SK-N-SH (cell line): ENCODE measurements at regions of chr4 and their contacts with region 1.

Region 1: DNA sequence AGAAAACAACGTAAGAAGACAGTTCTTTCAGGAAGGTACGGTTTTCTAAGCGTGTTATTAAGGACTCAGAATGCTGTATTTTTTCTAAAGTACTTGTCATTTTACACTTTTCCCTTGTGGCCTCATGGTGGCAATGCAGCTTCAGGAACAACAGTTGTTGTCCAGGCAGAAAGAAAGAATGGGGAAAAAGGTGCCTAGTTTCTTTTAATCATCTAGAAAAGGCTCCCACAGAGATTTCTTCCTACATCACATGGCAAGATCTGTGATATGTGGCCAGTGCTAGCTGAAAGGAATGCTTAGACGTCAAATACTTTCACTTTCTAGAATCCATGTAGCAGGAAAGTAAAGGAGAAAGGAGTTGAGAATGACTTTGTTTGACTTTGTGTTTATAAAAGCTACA is 49.0 kb upstream of the TRAM1L1 start:
- DNase-seq: peak; percentile 30
- H3K4me3 ChIP-seq: no peak overlapping the region
- H3K27ac ChIP-seq: no peak overlapping the region
- H3K4me1 ChIP-seq: no peaks in the 10 kb centered on the region; a peak in 1 of 4 replicates
- H3K27me3 ChIP-seq: no peaks in the 10 kb centered on the region
- CTCF ChIP-seq: peak; percentile 73
- EP300 ChIP-seq: no peak
- RAD21 ChIP-seq: peak; percentile 95

Region 2: DNA sequence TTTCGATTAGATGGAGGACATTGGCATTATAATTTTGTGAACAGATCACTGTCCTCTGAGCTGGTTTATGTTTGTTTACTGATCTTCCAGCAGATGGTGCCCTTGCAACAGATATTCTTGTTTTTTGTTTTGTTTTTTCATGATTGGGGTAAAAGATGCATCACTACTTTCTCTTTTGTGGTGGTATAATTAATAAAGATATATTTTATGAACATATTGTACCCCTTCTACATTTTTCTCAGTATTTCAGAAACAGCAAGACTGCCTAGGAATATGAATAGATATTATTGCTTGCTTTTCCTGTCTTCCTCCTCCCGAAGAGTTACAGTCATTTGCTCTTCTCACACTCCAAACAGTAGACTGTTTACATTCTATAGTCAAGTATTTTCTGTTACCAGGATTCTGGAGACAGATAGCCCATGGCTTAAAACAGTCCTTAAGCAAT is 954.2 kb before region 1 on chr4:
- CTCF ChIA-PET with region 1: interaction called, 15 read pairs
- POLR2A ChIA-PET with region 1: no interaction called
- DNase-seq: peak; percentile 24
- H3K4me3 ChIP-seq: peak overlapping the region in 1 of 2 experiments; percentile 46; a peak in 1 of 4 replicates
- H3K27ac ChIP-seq: no peak overlapping the region
- H3K4me1 ChIP-seq: peaks cover 0 to 9% of the 10 kb centered on the region in 2 experiments; a peak in 2 of 4 replicates
- H3K27me3 ChIP-seq: no peaks in the 10 kb centered on the region
- CTCF ChIP-seq: peak; percentile 62
- EP300 ChIP-seq: no peak
- RAD21 ChIP-seq: peak; percentile 86

Region 3: DNA sequence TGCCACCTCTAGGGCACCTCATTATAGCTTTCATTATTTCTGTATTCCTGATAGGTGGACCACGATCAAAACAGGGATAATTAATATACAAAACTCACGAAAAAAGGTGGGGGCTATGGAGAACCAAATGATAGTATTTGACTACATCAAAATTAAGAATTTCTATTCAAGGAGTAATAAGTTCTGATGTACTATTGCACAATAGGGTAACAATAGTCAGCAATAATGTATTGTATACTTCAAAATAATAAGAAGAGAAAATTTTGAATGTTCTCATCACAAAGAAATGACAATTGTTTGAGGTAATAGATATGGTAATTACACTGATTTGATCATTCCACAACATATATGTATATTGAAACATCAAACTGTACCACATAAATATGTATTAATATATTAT is 278.3 kb after region 1 on chr4:
- CTCF ChIA-PET with region 1: no interaction called
- POLR2A ChIA-PET with region 1: no interaction called
- DNase-seq: no peak
- H3K4me3 ChIP-seq: no peak overlapping the region
- H3K27ac ChIP-seq: no peak overlapping the region
- H3K4me1 ChIP-seq: no peaks in the 10 kb centered on the region
- H3K27me3 ChIP-seq: no peaks in the 10 kb centered on the region
- CTCF ChIP-seq: no peak
- EP300 ChIP-seq: no peak
- RAD21 ChIP-seq: no peak

Region 4: GRCh38 chr4:117560329-117560728 is 425.9 kb after region 1 on chr4:
- CTCF ChIA-PET with region 1: interaction called, 11 read pairs
- POLR2A ChIA-PET with region 1: no interaction called
- DNase-seq: no peak
- H3K4me3 ChIP-seq: no peak overlapping the region
- H3K27ac ChIP-seq: no peak overlapping the region
- H3K4me1 ChIP-seq: no peaks in the 10 kb centered on the region
- H3K27me3 ChIP-seq: no peaks in the 10 kb centered on the region
- CTCF ChIP-seq: peak; percentile 45
- EP300 ChIP-seq: no peak
- RAD21 ChIP-seq: peak; percentile 61

Region 5: DNA sequence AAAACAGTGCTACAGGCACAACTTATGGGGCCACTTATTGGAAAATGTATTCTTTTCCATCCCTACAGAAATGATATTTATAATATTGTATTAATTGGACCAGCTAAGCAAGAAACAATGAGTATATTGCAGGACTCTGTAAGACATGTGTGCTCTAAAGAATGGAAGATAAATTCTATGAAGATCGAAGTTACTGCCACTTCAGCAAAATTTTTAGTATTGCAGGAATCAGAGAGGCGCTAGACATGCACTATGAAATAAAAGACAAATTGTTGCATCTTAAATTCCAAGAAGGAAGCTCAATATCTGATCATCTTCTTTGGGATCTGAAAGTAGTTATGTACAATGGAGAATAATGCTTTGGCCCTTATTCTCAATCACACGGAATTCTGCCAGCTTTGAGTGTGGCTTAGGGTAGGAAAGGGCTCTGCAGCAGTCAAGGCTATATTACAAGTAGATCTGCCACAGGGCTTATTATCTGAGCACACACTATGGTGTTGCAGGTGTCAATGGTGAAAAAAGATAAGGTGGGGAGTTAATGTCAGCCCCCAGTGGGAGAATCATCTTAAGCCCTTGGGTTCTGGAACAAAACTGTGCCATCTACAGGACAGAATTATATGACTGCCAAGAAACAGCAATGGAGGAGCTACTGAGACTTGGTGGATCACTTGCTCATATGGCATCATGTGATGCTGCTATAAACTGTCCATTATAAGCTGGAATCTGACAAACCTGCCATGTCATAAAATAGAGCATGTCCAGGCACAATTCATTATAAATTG is 565.9 kb after region 1 on chr4:
- CTCF ChIA-PET with region 1: interaction called, 10 read pairs
- POLR2A ChIA-PET with region 1: no interaction called
- DNase-seq: no peak
- H3K4me3 ChIP-seq: no peak overlapping the region
- H3K27ac ChIP-seq: no peak overlapping the region
- H3K4me1 ChIP-seq: no peaks in the 10 kb centered on the region
- H3K27me3 ChIP-seq: no peaks in the 10 kb centered on the region
- CTCF ChIP-seq: peak; percentile 50
- EP300 ChIP-seq: no peak
- RAD21 ChIP-seq: peak; percentile 50